Right ventricle myocardium superior (tissue), 1 donor: ENCODE measurements at regions of chr7 and their contacts with region 1.

Region 1: GRCh38 chr7:98021588-98022351 is 31.8 kb upstream of the OCM2 start:
- DNase-seq: peak; percentile 88
- ATAC-seq: peak; percentile 88

Region 2: DNA sequence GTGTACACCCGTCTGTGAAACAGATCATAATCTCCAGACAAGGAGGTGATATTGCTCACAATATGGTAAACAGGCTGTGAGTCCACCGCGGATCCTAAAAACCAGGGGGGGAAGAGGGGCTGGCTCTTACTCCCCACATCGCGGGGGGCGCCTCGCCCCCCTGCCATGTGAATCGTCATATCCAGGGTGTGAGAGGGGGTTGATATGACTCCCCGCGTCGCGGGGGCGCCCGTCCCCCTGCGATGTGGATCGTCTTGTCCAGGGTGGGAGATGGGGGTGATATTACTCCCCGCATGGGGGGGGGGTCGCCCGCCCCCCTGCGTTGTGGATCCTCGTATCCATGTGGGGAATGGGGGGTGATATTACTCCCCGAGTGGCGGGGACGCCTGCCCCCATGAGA is 62.7 kb before region 1 on chr7:
- intact Hi-C with region 1: no loop called
- DNase-seq: no peak
- ATAC-seq: no peak

Region 3: GRCh38 chr7:98168181-98168905 is 146.6 kb after region 1 on chr7:
- intact Hi-C with region 1: loop called (anchors 2 kb)
- DNase-seq: no peak
- ATAC-seq: peak; percentile 79

Region 4: DNA sequence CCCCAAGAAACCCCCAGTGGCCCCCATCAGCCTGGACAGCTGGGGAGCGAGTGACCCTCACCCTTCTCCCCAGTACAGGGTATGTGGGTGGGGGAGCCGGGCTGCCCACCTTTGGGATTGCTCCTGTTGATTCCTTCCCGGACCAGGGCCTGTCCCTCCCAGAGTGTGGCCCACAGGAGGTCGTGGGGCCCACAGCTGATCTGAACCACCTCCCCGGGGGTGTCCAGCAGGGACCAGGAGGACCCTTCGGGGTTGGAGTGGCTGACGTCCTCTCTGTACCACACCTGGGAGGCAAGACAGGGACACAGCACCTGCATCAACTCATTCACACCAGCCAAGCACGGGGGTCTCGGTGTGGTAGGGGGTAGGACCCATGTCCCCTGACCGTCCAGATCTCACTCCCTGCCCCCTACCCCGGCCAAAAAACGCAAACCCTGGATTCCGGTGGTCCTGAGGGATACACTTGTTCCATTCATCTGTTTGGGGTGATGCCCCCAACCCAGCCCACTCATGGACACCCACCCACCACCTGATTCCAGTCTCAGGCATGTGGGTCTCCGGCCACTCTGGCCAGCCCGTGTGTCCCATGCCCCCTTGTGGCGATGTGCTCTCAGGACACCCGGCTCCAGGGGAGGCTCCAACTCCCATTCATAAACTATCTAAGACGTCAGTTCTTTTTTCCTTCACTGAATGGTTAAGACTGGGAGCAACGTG is 219.3 kb after region 1 on chr7:
- intact Hi-C with region 1: loop called (anchors 5 kb)
- DNase-seq: no peak
- ATAC-seq: peak; percentile 72